Activated CD4-positive, alpha-beta memory T cell treated with anti-CD3 and anti-CD28 coated beads for 36 hours (primary cell): ENCODE measurements at regions of chr1 and their contacts with region 1.

Region 1: GRCh38 chr1:89632657-89633247 is at the start of gene LRRC8C:
- DNase-seq: peak; percentile 90
- H3K4me3 Mint-ChIP-seq: peak within 1 kb of the TSS; percentile 93
- H3K27ac Mint-ChIP-seq: peak within 1 kb of the TSS; percentile 95
- H3K4me1 Mint-ChIP-seq: peaks cover 68% of the 10 kb centered on the region
- H3K27me3 Mint-ChIP-seq: no peaks in the 10 kb centered on the region
- total RNA-seq, gene LRRC8C: 36.4 to 40.4 TPM

Region 2: GRCh38 chr1:89566761-89567174 is 66.0 kb before region 1 on chr1:
- CTCF ChIA-PET with region 1: no interaction called
- POLR2A ChIA-PET with region 1: no interaction called
- intact Hi-C with region 1: no loop called
- DNase-seq: no peak
- H3K4me3 Mint-ChIP-seq: no peak overlapping the region
- H3K27ac Mint-ChIP-seq: no peak overlapping the region
- H3K4me1 Mint-ChIP-seq: peaks cover 51% of the 10 kb centered on the region
- H3K27me3 Mint-ChIP-seq: no peaks in the 10 kb centered on the region

Region 3: DNA sequence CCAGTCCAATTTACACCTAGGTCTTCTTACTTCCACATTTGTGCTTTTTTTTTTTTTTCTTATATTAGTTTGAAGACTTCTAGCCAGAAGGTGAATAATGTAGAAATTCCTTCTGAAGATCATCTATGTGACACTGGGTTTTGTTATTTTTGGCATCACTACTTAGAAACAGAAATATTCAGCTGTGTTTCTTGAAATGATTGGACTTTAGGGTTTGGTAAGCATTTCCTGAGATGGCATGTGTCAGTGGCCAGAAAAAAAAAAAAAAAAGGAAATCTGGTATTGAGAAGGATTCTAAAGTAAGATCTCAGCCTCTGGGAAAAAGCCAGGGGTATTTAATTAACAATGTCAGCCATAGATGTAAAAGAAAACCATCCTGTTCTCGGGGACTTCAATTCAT is 43.2 kb before region 1 on chr1:
- CTCF ChIA-PET with region 1: no interaction called
- POLR2A ChIA-PET with region 1: no interaction called
- intact Hi-C with region 1: no loop called
- DNase-seq: no peak
- H3K4me3 Mint-ChIP-seq: no peak overlapping the region
- H3K27ac Mint-ChIP-seq: peak overlapping the region; percentile 69
- H3K4me1 Mint-ChIP-seq: peaks cover 86% of the 10 kb centered on the region
- H3K27me3 Mint-ChIP-seq: no peaks in the 10 kb centered on the region

Region 4: DNA sequence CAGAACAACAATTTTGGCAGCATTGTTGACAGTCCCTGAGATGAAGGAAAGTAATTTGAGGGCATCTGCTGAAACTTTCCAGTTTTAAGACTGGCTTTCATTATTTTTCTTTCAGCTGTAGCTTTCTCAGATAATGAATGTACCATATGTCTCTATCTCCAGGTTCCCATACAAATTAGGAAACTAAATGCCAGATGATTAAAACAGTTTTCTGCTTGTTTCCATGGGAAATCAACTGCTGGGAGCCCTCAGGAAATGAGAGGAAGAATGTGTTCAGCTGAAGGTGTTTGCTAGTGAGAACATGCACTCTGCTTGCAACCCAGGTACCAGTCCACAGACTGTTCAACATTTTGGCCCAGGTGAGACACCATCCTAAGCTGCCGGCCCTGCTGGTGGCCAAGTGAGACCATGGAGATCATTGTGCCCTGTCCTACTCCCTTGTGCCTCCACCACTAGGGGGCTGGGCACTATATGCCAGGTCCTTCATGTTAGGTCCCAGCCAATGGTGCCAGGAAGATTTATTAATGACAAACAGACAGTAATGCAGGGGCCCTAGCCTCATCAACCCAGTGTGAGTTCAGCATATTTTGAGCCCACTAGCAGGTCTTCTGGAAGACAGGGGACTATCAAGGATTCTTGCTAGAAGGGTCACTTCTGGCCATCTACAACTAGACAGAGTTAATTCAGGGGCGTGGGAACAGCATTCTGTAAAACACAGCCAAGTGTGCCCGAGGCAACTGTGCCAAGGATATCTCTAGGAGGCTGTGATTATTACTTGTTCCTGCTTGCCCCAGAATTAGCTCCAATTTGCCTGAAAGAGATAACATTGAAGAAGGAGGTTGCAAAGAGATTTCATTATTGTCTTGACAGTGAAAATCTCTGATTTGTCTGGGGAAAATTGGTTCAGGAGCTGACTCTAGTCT is 16.8 kb before region 1 on chr1:
- CTCF ChIA-PET with region 1: interaction called, 20 read pairs
- POLR2A ChIA-PET with region 1: interaction called, 225 read pairs
- intact Hi-C with region 1: loop called (anchors 1 kb)
- DNase-seq: peak; percentile 33
- H3K4me3 Mint-ChIP-seq: no peak overlapping the region
- H3K27ac Mint-ChIP-seq: no peak overlapping the region
- H3K4me1 Mint-ChIP-seq: peaks cover 82% of the 10 kb centered on the region
- H3K27me3 Mint-ChIP-seq: no peaks in the 10 kb centered on the region

Region 5: GRCh38 chr1:89657886-89658285 is 25.1 kb after region 1 on chr1:
- CTCF ChIA-PET with region 1: interaction called, 6 read pairs
- POLR2A ChIA-PET with region 1: interaction called, 11 read pairs
- intact Hi-C with region 1: loop called (anchors 1 kb)
- DNase-seq: no peak
- H3K4me3 Mint-ChIP-seq: no peak overlapping the region
- H3K27ac Mint-ChIP-seq: peak overlapping the region; percentile 68
- H3K4me1 Mint-ChIP-seq: peaks cover 92% of the 10 kb centered on the region
- H3K27me3 Mint-ChIP-seq: no peaks in the 10 kb centered on the region

Region 6: GRCh38 chr1:89698624-89699023 is 65.9 kb after region 1 on chr1:
- CTCF ChIA-PET with region 1: interaction called, 3 read pairs
- POLR2A ChIA-PET with region 1: interaction called, 4 read pairs
- intact Hi-C with region 1: loop called (anchors 2 kb)
- DNase-seq: no peak
- H3K4me3 Mint-ChIP-seq: no peak overlapping the region
- H3K27ac Mint-ChIP-seq: peak overlapping the region; percentile 77
- H3K4me1 Mint-ChIP-seq: peaks cover 90% of the 10 kb centered on the region
- H3K27me3 Mint-ChIP-seq: no peaks in the 10 kb centered on the region

Region 7: DNA sequence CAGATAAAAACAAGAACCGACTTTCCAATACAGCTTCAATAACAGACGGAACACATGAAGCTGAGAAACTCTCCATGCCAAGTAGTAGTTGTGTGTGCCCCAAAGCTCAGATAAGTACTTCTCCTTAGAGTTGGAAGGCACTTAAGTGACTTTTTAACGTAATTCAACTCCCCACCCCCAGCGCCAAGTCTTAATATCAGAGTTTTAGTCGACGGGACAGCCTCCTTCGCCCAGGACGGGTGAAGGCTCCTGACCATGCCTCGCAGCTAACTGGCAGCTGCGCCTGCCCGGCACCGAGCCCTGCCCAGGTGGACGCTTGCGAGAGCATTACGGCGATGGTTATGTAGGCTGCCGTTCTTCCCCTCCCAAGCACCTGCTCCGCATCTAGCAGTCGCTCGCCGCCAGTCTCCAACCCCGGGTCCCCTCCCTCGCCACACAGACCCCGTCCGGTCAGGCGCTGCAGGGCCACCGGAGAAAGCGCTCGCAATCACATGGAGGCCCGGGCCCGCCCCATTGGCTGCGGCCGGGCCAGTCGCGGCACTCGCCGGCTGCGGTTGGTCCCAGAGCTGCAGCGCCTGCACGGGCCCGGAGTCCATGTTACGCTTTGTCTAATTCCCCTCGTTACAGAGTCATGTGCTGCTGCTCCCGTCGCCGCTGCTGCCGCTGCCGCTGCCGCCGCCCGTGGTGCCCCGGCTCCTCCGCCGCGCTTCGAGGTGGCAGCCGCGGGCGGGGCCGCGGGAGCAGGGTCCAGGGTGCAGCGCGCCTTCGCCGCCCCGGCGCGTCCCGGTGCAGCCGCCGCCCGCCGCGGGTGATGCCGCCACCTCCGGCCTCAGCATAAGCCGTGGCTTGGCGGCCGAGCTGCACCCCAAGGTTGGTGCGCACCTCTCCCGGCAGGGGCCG is 187.9 kb after region 1 on chr1 and contains the start of gene LRRC8D:
- CTCF ChIA-PET with region 1: no interaction called
- POLR2A ChIA-PET with region 1: no interaction called
- intact Hi-C with region 1: no loop called
- DNase-seq: peak; percentile 86
- H3K4me3 Mint-ChIP-seq: peak within 1 kb of the TSS; percentile 85
- H3K27ac Mint-ChIP-seq: peak within 1 kb of the TSS; percentile 55
- H3K4me1 Mint-ChIP-seq: peaks cover 26% of the 10 kb centered on the region
- H3K27me3 Mint-ChIP-seq: no peaks in the 10 kb centered on the region
- total RNA-seq, gene LRRC8D: 17.7 to 19.4 TPM

Region 8: DNA sequence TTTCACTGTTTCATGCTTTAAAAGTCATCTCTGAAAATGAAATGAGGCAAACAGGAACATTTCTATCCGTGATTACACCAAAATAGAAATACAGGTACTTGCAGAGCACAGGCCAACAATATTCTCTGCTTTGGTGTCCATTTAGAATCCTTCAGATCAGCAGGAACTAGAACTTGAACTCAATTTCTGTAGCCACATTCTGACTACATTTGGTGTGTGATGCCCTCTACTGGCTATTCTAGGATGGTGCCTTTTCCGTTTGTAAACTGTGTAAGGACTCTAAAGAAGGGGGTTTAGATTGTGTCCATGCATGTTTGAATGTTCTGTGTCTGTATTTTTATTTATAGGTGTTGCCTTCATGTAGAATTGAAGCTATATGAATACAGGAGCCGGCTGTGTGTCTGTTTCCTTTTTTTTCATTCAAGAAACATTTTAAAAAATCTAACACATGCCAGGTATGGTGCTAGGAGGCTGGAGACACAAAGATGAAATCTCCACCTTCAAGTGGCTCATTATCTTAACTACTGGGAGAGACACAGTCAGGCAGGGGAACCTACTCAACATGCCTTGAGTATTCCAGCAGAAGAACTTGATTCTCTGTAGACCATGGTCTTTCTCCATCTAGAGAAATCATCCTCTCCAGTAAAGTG is 354.5 kb after region 1 on chr1:
- CTCF ChIA-PET with region 1: no interaction called
- POLR2A ChIA-PET with region 1: no interaction called
- intact Hi-C with region 1: loop called (anchors 2 kb)
- DNase-seq: peak; percentile 50
- H3K4me3 Mint-ChIP-seq: no peak overlapping the region
- H3K27ac Mint-ChIP-seq: no peak overlapping the region
- H3K4me1 Mint-ChIP-seq: no peaks in the 10 kb centered on the region
- H3K27me3 Mint-ChIP-seq: no peaks in the 10 kb centered on the region